ENCODE measurements at regions of chr4 and their contacts with region 1.

Region 1: GRCh38 chr4:189547345-189547958 is 393.2 kb upstream of the FRG1 start:
- DNase-seq: no peak
- H3K4me3 ChIP-seq: no peak overlapping the region
- H3K27ac ChIP-seq: no peak overlapping the region
- H3K4me1 ChIP-seq: no peaks in the 10 kb centered on the region
- H3K27me3 ChIP-seq: no peaks in the 10 kb centered on the region
- CTCF ChIP-seq: no peak
- POLR2A ChIP-seq: no peak

Region 2: DNA sequence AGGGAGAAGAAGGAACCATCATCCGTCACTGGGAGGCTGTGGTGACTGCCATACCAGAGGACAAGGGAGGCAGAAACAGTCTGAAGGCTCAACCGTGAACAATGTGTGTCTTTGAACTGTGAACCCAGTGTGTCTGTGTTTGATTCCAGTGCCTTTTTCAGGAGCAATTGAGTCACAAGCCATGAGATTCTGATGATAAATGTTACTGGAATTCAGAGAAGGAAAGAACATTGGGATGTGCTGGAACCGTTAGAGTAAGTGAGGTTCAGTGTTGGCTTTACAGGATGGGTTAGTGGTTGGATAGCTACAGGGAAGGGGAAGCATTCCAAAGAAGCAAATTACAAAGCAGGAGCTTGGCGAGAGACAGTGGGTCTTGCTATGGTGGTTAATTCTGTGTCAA is 943.8 kb before region 1 on chr4:
- intact Hi-C with region 1: no loop called
- DNase-seq: no peak
- H3K4me3 ChIP-seq: no peak overlapping the region
- H3K27ac ChIP-seq: no peak overlapping the region
- H3K4me1 ChIP-seq: no peaks in the 10 kb centered on the region
- H3K27me3 ChIP-seq: no peaks in the 10 kb centered on the region
- CTCF ChIP-seq: no peak
- POLR2A ChIP-seq: no peak

Region 3: GRCh38 chr4:189232274-189232673 is 315.2 kb before region 1 on chr4:
- intact Hi-C with region 1: loop called (anchors 5 kb)
- DNase-seq: no peak
- H3K4me3 ChIP-seq: no peak overlapping the region
- H3K27ac ChIP-seq: no peak overlapping the region
- H3K4me1 ChIP-seq: no peaks in the 10 kb centered on the region
- H3K27me3 ChIP-seq: no peaks in the 10 kb centered on the region
- CTCF ChIP-seq: no peak
- POLR2A ChIP-seq: no peak

Region 4: DNA sequence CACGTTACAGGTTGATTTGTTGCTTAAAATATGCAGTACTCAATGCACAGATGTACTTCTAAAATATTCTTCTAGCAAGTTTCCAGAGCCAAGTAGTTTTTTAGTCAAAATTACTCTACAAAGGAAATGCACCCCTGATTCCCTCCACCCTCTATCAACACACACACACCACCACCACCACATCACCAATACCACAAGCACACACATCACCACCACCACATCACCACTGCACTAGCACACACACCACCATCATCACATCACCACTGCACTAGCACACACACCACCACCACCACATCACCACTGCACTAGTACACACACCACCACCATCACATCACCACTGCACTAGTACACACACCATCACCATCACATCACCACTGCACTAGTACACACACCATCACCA is 288.1 kb after region 1 on chr4:
- intact Hi-C with region 1: no loop called
- DNase-seq: no peak
- H3K4me3 ChIP-seq: no peak overlapping the region
- H3K27ac ChIP-seq: no peak overlapping the region
- H3K4me1 ChIP-seq: no peaks in the 10 kb centered on the region
- H3K27me3 ChIP-seq: no peaks in the 10 kb centered on the region
- CTCF ChIP-seq: no peak
- POLR2A ChIP-seq: no peak